Aorta (tissue), 5 donors: ENCODE measurements at regions of chr2 and their contacts with region 1.

Region 1: GRCh38 chr2:128027801-128028667 is at the start of gene SAP130:
- DNase-seq: peak; percentile 99 to 100
- ATAC-seq: peak; percentile 97
- H3K4me3 ChIP-seq: peak within 1 kb of the TSS; percentile 86 to 90
- H3K27ac ChIP-seq: peak within 1 kb of the TSS in 1 of 2 donors; percentile 91
- H3K4me1 ChIP-seq: no peaks in the 10 kb centered on the region
- H3K27me3 ChIP-seq: no peaks in the 10 kb centered on the region
- total RNA-seq, gene SAP130: 23.5 to 23.8 TPM

Region 2: GRCh38 chr2:127884436-127885345 is 143.3 kb before region 1 on chr2:
- intact Hi-C with region 1: loop called in 1 of 2 experiments (anchors 10 kb)
- DNase-seq: no peak
- ATAC-seq: no peak
- H3K4me3 ChIP-seq: peak overlapping the region; percentile 4 to 39
- H3K27ac ChIP-seq: peak overlapping the region in 1 of 2 donors; percentile 54
- H3K4me1 ChIP-seq: peaks cover 2 to 15% of the 10 kb centered on the region in 2 donors
- H3K27me3 ChIP-seq: no peaks in the 10 kb centered on the region

Region 3: GRCh38 chr2:128808462-128809258 is 780.6 kb after region 1 on chr2:
- intact Hi-C with region 1: no loop called
- DNase-seq: no peak
- ATAC-seq: no peak
- H3K4me3 ChIP-seq: no peak overlapping the region
- H3K27ac ChIP-seq: no peak overlapping the region
- H3K4me1 ChIP-seq: no peaks in the 10 kb centered on the region
- H3K27me3 ChIP-seq: no peaks in the 10 kb centered on the region